ENCODE measurements at regions of chr3 and their contacts with region 1.

Region 1: DNA sequence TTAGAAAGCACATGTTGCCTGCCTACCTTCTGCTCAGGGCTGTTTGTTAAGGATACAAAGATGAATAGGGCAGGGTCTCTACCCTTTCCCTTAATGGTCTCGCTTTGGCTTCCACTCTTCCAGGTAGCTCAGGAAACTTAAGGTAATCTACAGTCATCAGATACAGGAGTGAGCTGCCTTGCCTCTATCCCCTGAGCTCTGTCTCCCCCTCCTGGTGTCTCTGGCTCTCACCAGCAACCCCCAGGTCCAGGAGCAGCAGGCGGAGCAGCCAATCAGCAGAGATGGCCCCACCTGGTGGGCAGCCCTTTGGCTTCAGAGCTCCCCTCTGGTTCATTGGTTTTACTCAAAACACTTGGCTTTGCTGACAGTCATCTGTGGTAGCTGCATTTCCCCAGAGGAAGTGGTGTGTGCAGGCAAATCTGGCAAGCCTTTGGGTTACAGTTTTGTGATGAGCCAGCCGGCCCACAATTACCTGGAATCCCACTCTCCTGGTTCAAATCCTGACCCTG is 8.5 kb upstream of the CX3CR1 start:
- DNase-seq: peak; percentile 72 to 86
- ATAC-seq: peak; percentile 89 to 93 (median 92)
- H3K4me3 ChIP-seq: no peak overlapping the region
- H3K27ac ChIP-seq: peak overlapping the region; percentile 83
- H3K4me1 ChIP-seq: peaks cover 15% of the 10 kb centered on the region
- H3K27me3 ChIP-seq: no peaks in the 10 kb centered on the region
- CTCF ChIP-seq: peak; percentile 93

Region 2: GRCh38 chr3:39101022-39101689 is 187.2 kb before region 1 on chr3:
- intact Hi-C with region 1: loop called (anchors 1 to 5 kb)
- DNase-seq: no peak
- ATAC-seq: peak; percentile 58 to 85 (median 68)
- H3K4me3 ChIP-seq: no peak overlapping the region
- H3K27ac ChIP-seq: no peak overlapping the region
- H3K4me1 ChIP-seq: peaks cover 24% of the 10 kb centered on the region
- H3K27me3 ChIP-seq: no peaks in the 10 kb centered on the region
- CTCF ChIP-seq: peak; percentile 64

Region 3: GRCh38 chr3:39126532-39127071 is 161.8 kb before region 1 on chr3:
- intact Hi-C with region 1: loop called (anchors 1 to 5 kb)
- DNase-seq: no peak
- ATAC-seq: peak; percentile 69 to 93 (median 84)
- H3K4me3 ChIP-seq: no peak overlapping the region
- H3K27ac ChIP-seq: no peak overlapping the region
- H3K4me1 ChIP-seq: peaks cover 5% of the 10 kb centered on the region
- H3K27me3 ChIP-seq: no peaks in the 10 kb centered on the region
- CTCF ChIP-seq: peak; percentile 57

Region 4: DNA sequence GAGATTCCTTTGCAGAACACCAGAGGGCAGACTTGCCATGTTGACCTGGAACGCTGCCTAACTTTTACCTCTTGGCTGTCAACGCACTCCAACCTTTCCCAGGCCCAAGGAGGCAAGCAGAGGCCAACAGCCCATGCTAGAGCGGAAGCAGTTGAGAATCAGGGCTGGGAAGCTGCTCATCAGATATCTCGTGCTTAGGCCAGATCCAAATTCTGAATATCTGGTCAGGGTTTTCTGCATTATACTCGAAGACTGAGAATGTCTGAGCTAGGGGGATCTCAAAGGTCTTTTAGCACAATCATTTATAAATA is 98.4 kb before region 1 on chr3:
- intact Hi-C with region 1: loop called (anchors 5 kb)
- DNase-seq: peak in 1 of 2 donors; percentile 81
- ATAC-seq: peak; percentile 20 to 45 (median 31)
- H3K4me3 ChIP-seq: peak overlapping the region; percentile 75
- H3K27ac ChIP-seq: peak overlapping the region; percentile 91
- H3K4me1 ChIP-seq: peaks cover 45% of the 10 kb centered on the region
- H3K27me3 ChIP-seq: no peaks in the 10 kb centered on the region
- CTCF ChIP-seq: peak; percentile 73

Region 5: DNA sequence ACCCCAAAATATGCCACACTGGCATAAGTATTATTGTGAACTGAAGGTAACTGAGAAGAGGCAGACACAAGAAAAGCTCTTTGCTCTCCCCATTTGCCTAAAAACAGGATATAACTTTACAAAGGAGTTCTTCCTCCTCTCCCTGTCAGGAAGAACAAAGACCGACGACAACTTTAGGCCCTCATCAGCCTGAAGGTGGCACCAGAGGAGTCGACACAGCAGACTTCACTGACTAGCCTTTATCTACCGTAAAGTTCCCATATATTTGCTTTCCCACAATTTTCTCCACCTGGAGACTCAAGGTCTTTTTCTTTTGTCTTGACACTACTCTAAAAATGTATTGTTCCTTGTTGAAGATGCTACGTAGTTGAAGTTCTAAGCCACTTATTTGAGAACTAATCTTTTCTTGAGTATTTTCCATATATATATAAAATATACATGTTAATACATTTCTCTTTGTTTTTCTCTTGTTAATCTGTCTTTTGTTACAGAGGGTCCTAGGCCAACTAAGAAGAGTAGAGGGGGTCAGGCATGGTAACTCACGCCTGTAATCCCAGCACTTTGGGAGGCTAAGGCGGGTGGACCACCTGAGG is 79.8 kb before region 1 on chr3:
- intact Hi-C with region 1: loop called (anchors 2 to 5 kb)
- DNase-seq: peak; percentile 45 to 72
- ATAC-seq: peak; percentile 85 to 98 (median 92)
- H3K4me3 ChIP-seq: no peak overlapping the region
- H3K27ac ChIP-seq: peak overlapping the region; percentile 63
- H3K4me1 ChIP-seq: peaks cover 16% of the 10 kb centered on the region
- H3K27me3 ChIP-seq: no peaks in the 10 kb centered on the region
- CTCF ChIP-seq: peak; percentile 69